Sciatic nerve (tissue), 2 donors: ENCODE measurements at regions of chr3 and their contacts with region 1.

Region 1: DNA sequence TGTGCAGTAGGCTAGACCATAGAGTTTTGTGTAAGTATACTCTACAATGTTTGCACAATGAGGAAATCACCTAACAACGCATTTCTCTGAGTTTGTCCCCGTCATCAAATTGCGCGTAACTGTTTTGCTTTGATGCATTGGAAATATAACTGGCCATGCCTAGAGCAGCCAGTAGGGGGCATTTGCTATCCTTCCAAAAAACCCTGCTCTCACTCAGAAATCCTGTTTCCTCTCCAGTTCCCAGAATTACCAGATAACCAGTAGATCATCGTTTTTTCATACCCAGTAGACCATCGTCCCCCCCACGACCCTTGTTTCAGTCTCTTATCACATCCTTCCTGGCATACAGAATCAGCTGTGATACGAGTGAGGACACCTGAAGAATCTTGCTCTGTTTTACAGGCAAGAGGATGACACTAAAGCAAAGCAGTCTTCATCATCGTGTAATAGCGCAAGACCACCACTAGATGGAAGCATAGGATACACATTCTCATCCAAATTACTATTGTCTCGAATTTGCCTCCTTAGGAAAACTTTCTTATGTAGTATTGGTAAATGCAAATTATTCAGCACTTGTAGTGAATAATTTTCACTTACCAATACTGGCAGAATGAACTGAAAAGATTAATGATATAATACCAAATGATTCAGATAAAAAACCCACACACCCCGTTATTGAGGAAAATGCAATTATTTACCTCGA is 4.4 kb upstream of the GABRR3 start:
- DNase-seq: peak; percentile 69
- ATAC-seq: peak; percentile 90

Region 2: GRCh38 chr3:98223907-98224672 is 184.6 kb after region 1 on chr3:
- intact Hi-C with region 1: no loop called
- DNase-seq: no peak
- ATAC-seq: no peak

Region 3: GRCh38 chr3:98329392-98330124 is 290.1 kb after region 1 on chr3:
- intact Hi-C with region 1: loop called (anchors 10 kb)
- DNase-seq: no peak
- ATAC-seq: peak; percentile 42